Activated B cell treated with CpG ODN at 0.5 μM for 24 hours (primary cell): ENCODE measurements at regions of chr7 and their contacts with region 1.

Region 1: GRCh38 chr7:145884716-145885514 is 231.7 kb upstream of the CNTNAP2 start:
- DNase-seq: no peak
- ATAC-seq: peak; percentile 62
- H3K4me3 Mint-ChIP-seq: no peak overlapping the region
- H3K27ac Mint-ChIP-seq: no peak overlapping the region
- H3K4me1 Mint-ChIP-seq: peaks cover 5% of the 10 kb centered on the region
- H3K27me3 Mint-ChIP-seq: no peaks in the 10 kb centered on the region
- CTCF ChIP-seq: no peak

Region 2: GRCh38 chr7:145909956-145910611 is 25.2 kb after region 1 on chr7:
- CTCF ChIA-PET with region 1: no interaction called
- POLR2A ChIA-PET with region 1: no interaction called
- intact Hi-C with region 1: loop called (anchors 2 kb)
- DNase-seq: no peak
- ATAC-seq: peak; percentile 84
- H3K4me3 Mint-ChIP-seq: peak overlapping the region; percentile 44
- H3K27ac Mint-ChIP-seq: no peak overlapping the region
- H3K4me1 Mint-ChIP-seq: peaks cover 14% of the 10 kb centered on the region
- H3K27me3 Mint-ChIP-seq: no peaks in the 10 kb centered on the region
- CTCF ChIP-seq: no peak